ENCODE measurements at regions of chr19 and their contacts with region 1.

Region 1: GRCh38 chr19:13880059-13881043 is 3.4 kb downstream of the NANOS3 start:
- DNase-seq: peak; percentile 99
- H3K4me3 Mint-ChIP-seq: peak overlapping the region; percentile 45
- H3K27ac Mint-ChIP-seq: peak overlapping the region; percentile 77
- H3K4me1 Mint-ChIP-seq: peaks cover 34% of the 10 kb centered on the region
- H3K27me3 Mint-ChIP-seq: no peaks in the 10 kb centered on the region

Region 2: DNA sequence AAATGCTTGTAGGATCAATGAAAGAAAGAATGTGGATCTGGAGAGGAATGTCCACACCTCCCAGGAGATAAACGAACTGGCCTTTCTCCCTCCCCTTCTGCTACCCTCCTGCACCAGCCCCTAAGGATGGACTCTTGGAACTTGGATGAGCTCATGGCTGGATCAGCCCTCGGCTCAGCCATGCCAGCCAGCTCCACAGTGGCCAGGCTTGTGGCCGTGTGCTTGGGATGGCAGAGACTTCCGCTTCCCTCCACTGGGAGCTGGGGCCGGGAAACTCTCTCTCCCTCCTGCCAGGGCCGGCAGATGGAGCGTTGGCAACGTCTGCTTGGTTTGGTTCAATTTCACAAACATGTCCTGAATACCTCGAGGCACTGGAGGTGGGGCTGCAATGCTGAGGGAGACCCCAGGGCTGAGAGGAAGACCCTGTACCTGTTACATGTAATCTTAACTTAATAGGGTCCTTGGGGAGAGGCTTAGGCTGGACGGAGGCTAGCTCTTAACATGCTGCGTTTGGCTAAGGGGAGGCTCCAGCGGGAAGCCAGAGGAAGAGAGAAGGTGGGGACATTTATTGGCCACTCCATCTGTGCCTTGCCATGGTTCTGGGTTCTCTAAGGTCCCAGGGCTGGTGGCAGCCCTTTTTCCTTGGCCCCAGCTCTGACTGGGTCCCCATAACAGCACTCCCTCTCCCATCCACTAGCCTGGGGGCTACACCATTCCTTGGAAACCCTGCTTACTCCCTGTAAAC is 577.7 kb before region 1 on chr19:
- CTCF ChIA-PET with region 1: no interaction called
- intact Hi-C with region 1: no loop called
- DNase-seq: no peak
- H3K4me3 Mint-ChIP-seq: no peak overlapping the region
- H3K27ac Mint-ChIP-seq: no peak overlapping the region
- H3K4me1 Mint-ChIP-seq: peaks cover 4% of the 10 kb centered on the region
- H3K27me3 Mint-ChIP-seq: peaks cover 35% of the 10 kb centered on the region

Region 3: DNA sequence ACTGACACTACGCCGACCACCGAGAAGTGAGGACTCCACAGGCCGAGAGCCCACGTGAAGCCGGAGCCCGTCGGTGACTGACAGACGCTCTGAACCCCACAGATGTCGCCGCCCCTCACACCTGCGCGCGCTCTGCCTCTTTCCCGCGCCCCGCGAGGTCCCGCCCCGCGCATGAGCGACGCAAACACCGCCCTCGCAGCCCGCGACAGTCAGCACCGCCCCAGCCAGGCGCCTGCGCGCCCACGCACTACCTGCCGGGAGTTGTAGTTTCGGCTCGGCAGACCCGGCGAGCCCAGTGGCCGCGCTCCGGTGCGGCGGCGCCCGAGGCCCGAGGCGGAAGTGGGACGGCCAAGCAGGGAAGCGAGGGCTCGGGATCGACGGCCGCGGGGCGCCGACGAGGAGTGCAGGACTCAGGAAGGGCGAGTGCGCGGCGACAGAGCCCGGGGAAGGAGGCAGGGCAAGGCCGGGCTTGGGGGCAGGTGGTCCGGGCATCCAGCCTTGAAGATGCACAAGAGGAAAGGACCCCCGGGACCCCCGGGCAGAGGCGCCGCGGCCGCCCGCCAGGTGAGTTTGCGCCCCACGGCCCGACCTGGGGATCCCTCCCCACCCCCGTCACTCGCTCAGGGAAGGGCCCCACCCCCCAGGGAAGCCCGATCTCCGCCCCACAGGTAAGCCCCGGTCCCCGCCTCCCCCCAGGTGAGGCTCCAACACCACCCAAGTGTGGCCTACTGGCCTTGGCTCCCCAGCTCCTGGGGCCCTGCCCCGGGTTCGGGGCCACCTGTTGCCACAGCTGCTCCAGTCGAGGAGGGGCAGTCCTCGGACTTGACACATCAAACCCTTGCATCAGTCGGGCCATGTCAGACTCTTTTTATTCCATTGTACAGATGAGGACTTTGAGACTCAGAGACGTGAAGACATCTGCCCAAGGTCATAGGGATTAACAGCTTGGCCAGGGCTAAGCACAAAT is 25.9 kb after region 1 on chr19 and contains the starts of genes BRME1 and CC2D1A:
- CTCF ChIA-PET with region 1: interaction called, 5 read pairs
- intact Hi-C with region 1: loop called (anchors 2 kb)
- DNase-seq: peak; percentile 97
- H3K4me3 Mint-ChIP-seq: peak within 1 kb of the TSS; percentile 86
- H3K27ac Mint-ChIP-seq: peak within 1 kb of the TSS; percentile 88
- H3K4me1 Mint-ChIP-seq: peaks cover 30% of the 10 kb centered on the region
- H3K27me3 Mint-ChIP-seq: no peaks in the 10 kb centered on the region
- total RNA-seq, gene BRME1: 5.8 to 5.9 TPM
- total RNA-seq, gene CC2D1A: 27.4 to 28.6 TPM

Region 4: DNA sequence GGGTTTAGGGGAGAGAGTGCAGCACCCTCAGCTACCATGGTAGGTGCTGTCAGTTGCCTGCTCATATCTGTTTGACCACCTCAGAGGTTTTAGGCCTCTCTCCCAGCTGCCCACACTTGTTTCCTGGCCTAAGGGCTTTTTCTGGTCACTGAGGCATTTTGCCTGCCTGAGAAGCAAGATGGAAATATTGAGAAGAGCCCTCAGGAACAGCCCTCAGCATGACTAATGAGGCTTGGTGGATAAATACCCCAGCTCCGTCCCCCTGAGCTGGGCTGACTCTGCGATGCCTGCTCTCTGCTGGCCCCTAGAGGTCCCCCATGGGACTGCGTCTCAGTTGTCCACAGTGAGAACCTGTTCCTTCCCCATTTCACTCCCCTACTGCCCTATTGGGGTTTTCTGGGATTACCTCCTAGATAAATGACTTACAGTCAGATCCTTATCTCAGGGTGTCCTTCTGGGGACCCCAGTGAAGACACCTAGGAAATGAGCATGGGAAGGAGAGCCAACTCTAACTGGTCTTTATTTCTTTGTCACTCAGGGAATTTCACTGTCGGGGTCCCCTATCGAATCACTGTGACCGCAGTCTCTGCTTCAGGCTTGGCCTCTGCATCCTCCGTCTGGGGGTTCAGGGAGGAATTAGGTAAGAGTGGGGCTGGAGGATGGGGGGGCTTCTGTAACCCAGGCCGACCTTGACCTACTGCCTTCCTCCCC is 168.2 kb after region 1 on chr19:
- CTCF ChIA-PET with region 1: interaction called, 16 read pairs
- intact Hi-C with region 1: loop called (anchors 1 kb)
- DNase-seq: peak; percentile 81
- H3K4me3 Mint-ChIP-seq: no peak overlapping the region
- H3K27ac Mint-ChIP-seq: peak overlapping the region; percentile 30
- H3K4me1 Mint-ChIP-seq: no peaks in the 10 kb centered on the region
- H3K27me3 Mint-ChIP-seq: no peaks in the 10 kb centered on the region

Region 5: DNA sequence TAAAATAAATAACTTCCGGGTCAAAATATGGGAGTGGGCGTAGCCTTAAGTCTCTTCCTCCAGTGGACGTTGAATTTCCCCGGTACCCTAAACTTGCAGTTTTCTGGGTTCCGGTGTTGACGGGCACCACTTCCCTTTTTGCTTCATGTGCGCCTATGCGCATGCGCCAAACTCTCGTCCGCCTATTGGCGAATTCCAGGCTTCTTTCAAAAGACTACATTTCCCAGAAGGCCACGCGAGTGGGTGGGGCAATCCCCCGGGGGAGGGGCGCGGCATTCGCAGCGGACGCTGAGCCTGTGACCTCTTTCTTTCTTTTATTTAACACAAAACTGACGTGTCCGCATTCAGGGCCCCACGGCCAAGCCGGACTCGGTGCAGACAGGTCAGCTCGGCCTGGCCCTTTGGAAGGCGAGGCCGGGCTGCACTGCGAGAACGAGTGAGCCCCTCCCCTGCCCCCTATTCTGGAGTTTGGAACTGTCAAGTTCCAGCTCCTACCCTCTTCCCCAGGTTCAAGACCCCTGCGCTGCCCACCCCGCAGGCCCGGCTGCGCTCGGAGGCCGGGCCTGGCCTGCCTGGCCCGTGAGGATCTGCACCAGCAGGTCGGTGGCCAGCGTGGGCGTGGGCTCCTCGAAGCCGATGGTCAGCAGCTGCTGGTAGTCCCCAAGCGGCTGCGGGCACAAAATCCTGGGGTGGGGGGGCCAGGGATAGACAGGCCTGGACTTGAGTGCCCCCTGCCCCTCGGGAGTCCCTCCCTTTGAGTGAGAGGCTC is 201.2 kb after region 1 on chr19:
- CTCF ChIA-PET with region 1: interaction called, 12 read pairs
- intact Hi-C with region 1: no loop called
- DNase-seq: peak; percentile 100
- H3K4me3 Mint-ChIP-seq: peak overlapping the region; percentile 95
- H3K27ac Mint-ChIP-seq: peak overlapping the region; percentile 91
- H3K4me1 Mint-ChIP-seq: peaks cover 11% of the 10 kb centered on the region
- H3K27me3 Mint-ChIP-seq: no peaks in the 10 kb centered on the region

Region 6: DNA sequence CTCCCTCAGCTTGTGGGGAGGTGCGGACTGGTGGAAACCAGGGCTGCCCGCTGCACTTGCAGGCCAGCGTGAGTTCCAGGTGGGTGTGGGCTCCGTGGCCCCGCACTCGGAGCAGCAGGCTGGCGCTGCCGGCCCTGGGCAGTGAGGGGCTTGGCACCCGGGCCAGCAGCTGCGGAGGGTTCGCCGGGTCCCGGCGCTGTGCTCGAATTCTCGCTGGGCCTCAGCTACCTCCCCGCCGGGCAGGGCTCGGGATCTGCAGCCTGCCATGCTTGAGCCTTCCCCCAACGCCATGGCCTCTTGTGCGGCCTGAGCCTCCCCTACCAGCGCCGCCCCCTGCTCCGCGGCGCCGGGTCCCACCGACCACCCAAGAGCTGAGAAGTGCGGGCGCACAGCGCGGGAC is 397.3 kb after region 1 on chr19:
- CTCF ChIA-PET with region 1: no interaction called
- intact Hi-C with region 1: no loop called
- DNase-seq: no peak
- H3K4me3 Mint-ChIP-seq: no peak overlapping the region
- H3K27ac Mint-ChIP-seq: no peak overlapping the region
- H3K4me1 Mint-ChIP-seq: peaks cover 16% of the 10 kb centered on the region
- H3K27me3 Mint-ChIP-seq: no peaks in the 10 kb centered on the region

Region 7: GRCh38 chr19:14472202-14472938 is 592.0 kb after region 1 on chr19:
- CTCF ChIA-PET with region 1: no interaction called
- intact Hi-C with region 1: loop called (anchors 5 kb)
- DNase-seq: peak; percentile 83
- H3K4me3 Mint-ChIP-seq: no peak overlapping the region
- H3K27ac Mint-ChIP-seq: no peak overlapping the region
- H3K4me1 Mint-ChIP-seq: peaks cover 31% of the 10 kb centered on the region
- H3K27me3 Mint-ChIP-seq: peaks cover 19% of the 10 kb centered on the region

Measured in activated naive CD4-positive, alpha-beta T cell treated with anti-CD3 and anti-CD28 coated beads for 36 hours (primary cell).